Sciatic nerve (tissue), 2 donors: ENCODE measurements at regions of chr4 and their contacts with region 1.

Region 1: GRCh38 chr4:125314676-125315575 is at the start of gene FAT4:
- DNase-seq: peak; percentile 96
- ATAC-seq: peak; percentile 97
- total RNA-seq, gene FAT4: 23.4 TPM

Region 2: GRCh38 chr4:125338814-125339213 is 23.9 kb after region 1 on chr4:
- intact Hi-C with region 1: no loop called
- DNase-seq: no peak
- ATAC-seq: no peak

Region 3: GRCh38 chr4:125750828-125751466 is 436.0 kb after region 1 on chr4:
- intact Hi-C with region 1: loop called (anchors 10 kb)
- DNase-seq: no peak
- ATAC-seq: peak; percentile 89